ENCODE measurements at regions of chr20 and their contacts with region 1.

Region 1: DNA sequence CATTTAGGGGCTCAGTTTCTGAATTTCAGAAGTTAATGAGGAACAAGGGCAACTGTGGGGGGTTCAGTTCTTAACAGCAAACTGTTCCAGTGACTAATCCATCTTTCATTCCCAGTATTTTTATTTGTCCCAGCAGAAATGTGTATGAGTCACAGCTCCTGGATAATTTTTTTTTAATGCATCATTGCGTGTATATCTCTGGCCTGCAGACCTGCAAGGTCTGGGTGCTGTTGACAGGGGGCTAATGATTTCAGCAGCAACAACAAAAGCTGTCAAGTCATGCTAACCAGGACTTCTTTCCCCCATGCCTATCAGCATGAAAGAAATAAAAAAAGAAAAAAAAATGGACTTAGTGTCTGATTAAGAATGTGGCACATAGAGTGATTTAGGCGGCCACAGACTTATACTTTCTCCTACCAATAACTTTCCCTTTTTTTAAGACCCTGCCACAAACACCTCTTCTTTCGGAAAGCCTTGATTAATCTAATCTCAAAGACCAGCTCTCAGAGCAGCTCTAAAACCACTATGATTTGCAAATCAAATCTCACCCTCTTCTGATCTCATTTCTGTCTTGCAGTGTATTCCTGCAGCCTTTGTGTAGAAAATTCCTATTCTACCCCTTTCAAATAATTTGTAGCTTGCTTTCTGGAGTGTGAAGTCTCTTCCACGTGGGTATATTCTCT is 14.2 kb upstream of the PREX1 start:
- DNase-seq: peak; percentile 67
- ATAC-seq: peak; percentile 85
- H3K4me3 ChIP-seq: no peak overlapping the region
- H3K27ac ChIP-seq: peak overlapping the region; percentile 81
- H3K4me1 ChIP-seq: peaks cover 43% of the 10 kb centered on the region
- H3K27me3 ChIP-seq: no peaks in the 10 kb centered on the region
- CTCF ChIP-seq: no peak

Region 2: GRCh38 chr20:48853591-48854443 is 11.8 kb after region 1 on chr20:
- CTCF ChIA-PET with region 1: no interaction called
- POLR2A ChIA-PET with region 1: no interaction called
- in situ Hi-C with region 1: no loop called
- intact Hi-C with region 1: no loop called
- DNase-seq: no peak
- ATAC-seq: no peak
- H3K4me3 ChIP-seq: no peak overlapping the region
- H3K27ac ChIP-seq: no peak overlapping the region; the same call in 1 of the 2 replicates
- H3K4me1 ChIP-seq: peaks cover 19% of the 10 kb centered on the region; the same call in 1 of the 2 replicates
- H3K27me3 ChIP-seq: no peaks in the 10 kb centered on the region
- CTCF ChIP-seq: no peak

Region 3: GRCh38 chr20:49432550-49432949 is 590.6 kb after region 1 on chr20:
- CTCF ChIA-PET with region 1: no interaction called
- POLR2A ChIA-PET with region 1: interaction called, 10 read pairs
- in situ Hi-C with region 1: no loop called
- intact Hi-C with region 1: no loop called
- DNase-seq: no peak
- ATAC-seq: no peak
- H3K4me3 ChIP-seq: no peak overlapping the region
- H3K27ac ChIP-seq: no peak overlapping the region
- H3K4me1 ChIP-seq: peaks cover 3% of the 10 kb centered on the region; the same call in 1 of the 2 replicates
- H3K27me3 ChIP-seq: no peaks in the 10 kb centered on the region
- CTCF ChIP-seq: no peak

Measured in Panc1 (cell line).